PC-3 (cell line): ENCODE measurements at regions of chr7 and their contacts with region 1.

Region 1: GRCh38 chr7:134254311-134254710 is 62.4 kb downstream of the SLC35B4 start:
- DNase-seq: peak; percentile 44
- ATAC-seq: peak; percentile 58
- H3K4me3 ChIP-seq: no peak overlapping the region
- H3K27ac ChIP-seq: no peak overlapping the region
- H3K4me1 ChIP-seq: no peaks in the 10 kb centered on the region
- H3K27me3 ChIP-seq: peaks cover 14% of the 10 kb centered on the region
- CTCF ChIP-seq: peak; percentile 51; the same call in 1 of the 2 replicates

Region 2: GRCh38 chr7:134031835-134032617 is 222.3 kb before region 1 on chr7:
- CTCF ChIA-PET with region 1: no interaction called
- POLR2A ChIA-PET with region 1: no interaction called
- intact Hi-C with region 1: loop called (anchors 10 kb)
- DNase-seq: peak; percentile 26
- ATAC-seq: no peak; the same call in 1 of the 2 replicates
- H3K4me3 ChIP-seq: no peak overlapping the region
- H3K27ac ChIP-seq: no peak overlapping the region
- H3K4me1 ChIP-seq: peaks cover 17% of the 10 kb centered on the region
- H3K27me3 ChIP-seq: no peaks in the 10 kb centered on the region
- CTCF ChIP-seq: peak; percentile 58

Region 3: DNA sequence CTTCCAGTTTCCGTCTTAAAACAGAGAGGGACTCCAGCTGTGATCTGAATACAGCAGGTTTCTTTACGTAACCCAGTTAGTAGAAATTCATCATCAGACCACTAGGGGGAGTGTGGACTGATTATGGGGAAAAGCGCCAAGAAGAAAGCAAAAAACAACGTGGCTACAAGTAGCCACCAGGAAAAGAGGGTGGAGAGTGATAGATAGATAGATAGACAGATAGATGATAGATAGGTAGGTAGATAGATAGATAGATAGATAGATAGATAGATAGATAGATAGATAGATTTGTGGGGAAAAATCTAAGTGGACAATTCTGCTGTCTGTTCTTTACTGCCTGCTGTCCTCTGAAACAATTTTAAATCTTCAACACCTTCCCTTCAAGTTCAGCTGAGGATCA is 260.4 kb after region 1 on chr7:
- CTCF ChIA-PET with region 1: no interaction called
- POLR2A ChIA-PET with region 1: no interaction called
- intact Hi-C with region 1: no loop called
- DNase-seq: peak; percentile 93
- ATAC-seq: peak; percentile 4; the same call in 1 of the 2 replicates
- H3K4me3 ChIP-seq: no peak overlapping the region
- H3K27ac ChIP-seq: peak overlapping the region; percentile 96
- H3K4me1 ChIP-seq: peaks cover 55% of the 10 kb centered on the region
- H3K27me3 ChIP-seq: no peaks in the 10 kb centered on the region
- CTCF ChIP-seq: peak; percentile 80

Region 4: GRCh38 chr7:134632937-134633540 is 378.7 kb after region 1 on chr7:
- CTCF ChIA-PET with region 1: no interaction called
- POLR2A ChIA-PET with region 1: no interaction called
- intact Hi-C with region 1: no loop called
- DNase-seq: peak; percentile 64
- ATAC-seq: peak; percentile 69
- H3K4me3 ChIP-seq: no peak overlapping the region
- H3K27ac ChIP-seq: no peak overlapping the region
- H3K4me1 ChIP-seq: no peaks in the 10 kb centered on the region
- H3K27me3 ChIP-seq: no peaks in the 10 kb centered on the region
- CTCF ChIP-seq: peak; percentile 84

Region 5: GRCh38 chr7:134986363-134987251 is 732.3 kb after region 1 on chr7 and contains the start of gene AGBL3:
- CTCF ChIA-PET with region 1: no interaction called
- POLR2A ChIA-PET with region 1: no interaction called
- intact Hi-C with region 1: no loop called
- DNase-seq: peak; percentile 94
- ATAC-seq: peak; percentile 98
- H3K4me3 ChIP-seq: peak within 1 kb of the TSS; percentile 87
- H3K27ac ChIP-seq: peak within 1 kb of the TSS; percentile 45
- H3K4me1 ChIP-seq: peaks cover 20% of the 10 kb centered on the region; the same call in 1 of the 2 replicates
- H3K27me3 ChIP-seq: no peaks in the 10 kb centered on the region
- CTCF ChIP-seq: peak; percentile 74
- total RNA-seq, gene AGBL3: 1.9 and 2.5 TPM in 2 replicates